Esophagus squamous epithelium (tissue), 5 donors: ENCODE measurements at regions of chr2 and their contacts with region 1.

Region 1: DNA sequence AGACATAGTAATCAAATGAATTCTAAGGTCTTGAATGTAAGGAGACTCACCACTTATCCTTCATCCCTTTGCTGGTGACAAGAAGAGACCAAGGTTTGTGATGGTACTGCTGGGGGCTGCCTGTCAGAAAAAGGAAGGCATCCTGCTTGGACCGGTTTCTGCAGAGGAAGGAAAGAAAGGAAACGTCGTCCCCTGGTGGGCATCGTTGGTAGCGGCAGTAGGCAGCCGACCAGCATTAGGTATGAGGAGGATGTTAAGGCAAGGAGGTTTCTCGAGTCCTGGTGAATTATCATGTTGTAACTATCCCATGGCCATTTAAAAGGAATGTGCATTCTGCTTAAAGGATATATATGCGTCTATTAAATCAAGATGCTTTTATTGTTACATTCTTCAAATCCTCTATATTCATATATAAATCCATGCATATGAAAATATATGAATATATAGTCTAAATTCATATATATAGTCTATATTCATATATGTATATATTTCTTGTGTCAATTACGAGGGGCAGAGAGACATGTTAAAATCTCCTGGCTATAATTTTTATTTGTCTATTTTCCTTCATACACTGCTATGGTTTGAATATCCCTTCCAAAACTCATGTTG is 94.4 kb upstream of the TGFA start:
- DNase-seq: no peak
- H3K4me3 ChIP-seq: no peak overlapping the region
- H3K27ac ChIP-seq: no peak overlapping the region
- H3K4me1 ChIP-seq: no peaks in the 10 kb centered on the region
- H3K27me3 ChIP-seq: peaks cover 0 to 26% (median 0%) of the 10 kb centered on the region in 4 donors
- CTCF ChIP-seq: peak; percentile 70 to 98 (median 94)
- POLR2A ChIP-seq: no peak

Region 2: DNA sequence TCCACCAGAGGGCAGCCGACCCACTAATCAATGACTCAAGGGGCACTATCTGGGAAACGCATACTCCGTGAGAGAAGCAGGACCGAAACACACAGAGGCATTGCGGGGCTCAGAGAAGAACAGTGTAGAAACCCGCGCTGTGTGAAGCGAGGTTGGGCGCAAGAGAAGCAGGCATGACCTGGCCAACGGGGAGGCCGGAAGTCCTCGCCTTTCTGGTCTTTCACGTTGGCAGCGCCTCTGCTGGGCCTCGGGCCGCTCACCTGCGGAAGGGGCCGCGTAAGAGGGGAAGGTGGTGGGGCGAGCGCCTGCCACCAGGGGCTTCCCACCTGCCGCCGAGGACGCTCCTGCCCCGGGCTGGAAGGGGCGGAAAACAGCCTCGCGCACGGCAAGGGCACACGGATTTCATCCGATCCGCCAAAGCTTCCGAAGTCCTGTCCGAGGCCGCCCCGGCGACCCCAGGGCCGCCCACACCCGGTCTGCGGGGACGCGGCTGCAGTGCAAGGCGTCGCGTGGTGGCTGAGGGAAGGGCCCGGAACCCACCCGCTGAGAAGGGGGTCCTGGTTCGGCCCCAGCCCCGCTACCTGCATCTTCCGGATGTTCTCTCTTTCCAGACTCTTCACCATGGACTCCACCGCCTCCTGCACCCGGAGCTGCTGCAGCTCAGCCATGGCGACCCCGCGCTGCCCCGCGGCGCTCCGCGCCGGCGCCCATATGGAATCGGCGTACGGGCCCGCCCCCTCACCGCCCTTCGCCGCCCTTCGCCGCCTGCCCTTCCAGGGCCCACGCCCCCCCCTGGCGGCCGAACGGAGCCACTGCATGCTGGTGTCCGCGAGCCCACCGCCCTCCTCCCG is 346.4 kb before region 1 on chr2 and contains the start of gene FAM136A:
- intact Hi-C with region 1: loop called (anchors 5 kb)
- DNase-seq: peak; percentile 29
- H3K4me3 ChIP-seq: peak within 1 kb of the TSS; percentile 73 to 100 (median 98)
- H3K27ac ChIP-seq: peak within 1 kb of the TSS; percentile 87 to 96 (median 94)
- H3K4me1 ChIP-seq: peaks cover 4 to 26% (median 12%) of the 10 kb centered on the region in 3 donors
- H3K27me3 ChIP-seq: no peaks in the 10 kb centered on the region
- CTCF ChIP-seq: peak; percentile 93 to 98 (median 98)
- POLR2A ChIP-seq: peak in 1 of 4 donors; percentile 44
- total RNA-seq, gene FAM136A: 26.9 to 51.1 (median 39.9) TPM

Region 3: DNA sequence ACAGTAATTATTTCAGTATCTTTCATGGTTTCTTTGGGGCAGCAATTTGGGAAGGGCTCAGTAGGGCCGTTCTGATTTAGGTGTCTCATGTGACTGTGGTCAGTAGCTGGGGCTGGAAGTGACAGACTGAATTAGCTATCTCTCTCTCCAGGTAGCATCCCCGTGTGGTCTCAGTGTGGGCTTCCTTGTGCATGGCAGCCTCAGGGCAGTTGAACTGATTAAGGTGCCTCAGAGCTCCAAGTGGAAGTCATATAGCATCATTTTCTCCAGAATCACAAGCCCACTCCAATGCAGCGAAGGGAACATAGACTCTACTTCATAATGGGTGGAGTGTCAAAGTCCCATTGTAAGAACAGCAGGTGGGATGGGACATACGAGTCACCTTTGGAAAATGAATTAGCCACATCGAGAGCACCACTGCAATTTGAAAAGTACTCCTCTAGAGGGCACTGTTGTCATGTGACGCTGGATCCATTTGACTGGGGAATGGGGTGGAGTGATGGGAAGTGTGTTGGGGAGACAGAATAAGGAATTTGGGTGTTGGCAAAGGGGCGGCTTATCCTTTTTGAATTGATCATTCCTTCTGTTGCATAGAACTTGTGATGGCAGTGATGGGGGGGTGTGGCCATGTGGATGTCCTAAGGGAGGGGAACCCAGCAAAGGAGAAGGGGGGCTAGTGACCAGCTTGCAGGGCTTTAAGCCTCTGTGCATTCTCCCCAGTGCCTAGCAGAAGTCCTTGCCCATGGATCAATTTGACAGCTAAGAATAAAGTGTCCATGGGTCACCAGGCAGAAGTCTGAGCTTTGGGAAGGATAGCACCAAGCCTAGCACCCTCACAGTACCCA is 306.8 kb before region 1 on chr2:
- intact Hi-C with region 1: loop called (anchors 10 kb)
- DNase-seq: no peak
- H3K4me3 ChIP-seq: no peak overlapping the region
- H3K27ac ChIP-seq: no peak overlapping the region
- H3K4me1 ChIP-seq: peaks cover 0 to 24% (median 0%) of the 10 kb centered on the region in 3 donors
- H3K27me3 ChIP-seq: peaks cover 0 to 21% (median 0%) of the 10 kb centered on the region in 4 donors
- CTCF ChIP-seq: peak in 5 of 6 experiments; percentile 72 to 90 (median 78)
- POLR2A ChIP-seq: no peak

Region 4: GRCh38 chr2:70498054-70498453 is 149.9 kb before region 1 on chr2:
- intact Hi-C with region 1: no loop called
- DNase-seq: no peak
- H3K4me3 ChIP-seq: no peak overlapping the region
- H3K27ac ChIP-seq: no peak overlapping the region
- H3K4me1 ChIP-seq: peaks cover 0 to 12% (median 0%) of the 10 kb centered on the region in 3 donors
- H3K27me3 ChIP-seq: no peaks in the 10 kb centered on the region
- CTCF ChIP-seq: peak in 2 of 6 experiments; percentile 24 to 46
- POLR2A ChIP-seq: no peak

Region 5: GRCh38 chr2:71173096-71173495 is 525.1 kb after region 1 on chr2:
- intact Hi-C with region 1: no loop called
- DNase-seq: no peak
- H3K4me3 ChIP-seq: no peak overlapping the region
- H3K27ac ChIP-seq: no peak overlapping the region
- H3K4me1 ChIP-seq: no peaks in the 10 kb centered on the region
- H3K27me3 ChIP-seq: peaks cover 0 to 6% (median 0%) of the 10 kb centered on the region in 4 donors
- CTCF ChIP-seq: no peak
- POLR2A ChIP-seq: no peak